A673 (cell line): ENCODE measurements at regions of chr17 and their contacts with region 1.

Region 1: GRCh38 chr17:38536661-38537060 is 69.1 kb downstream of the SRCIN1 start:
- DNase-seq: no peak
- H3K4me3 ChIP-seq: no peak overlapping the region
- H3K27ac ChIP-seq: no peak overlapping the region
- H3K4me1 ChIP-seq: no peaks in the 10 kb centered on the region
- H3K27me3 ChIP-seq: no peaks in the 10 kb centered on the region
- CTCF ChIP-seq: no peak

Region 2: GRCh38 chr17:38498186-38498752 is 38.4 kb before region 1 on chr17:
- CTCF ChIA-PET with region 1: no interaction called
- POLR2A ChIA-PET with region 1: no interaction called
- intact Hi-C with region 1: loop called (anchors 2 kb)
- DNase-seq: no peak
- H3K4me3 ChIP-seq: no peak overlapping the region
- H3K27ac ChIP-seq: no peak overlapping the region
- H3K4me1 ChIP-seq: no peaks in the 10 kb centered on the region
- H3K27me3 ChIP-seq: no peaks in the 10 kb centered on the region
- CTCF ChIP-seq: no peak

Region 3: DNA sequence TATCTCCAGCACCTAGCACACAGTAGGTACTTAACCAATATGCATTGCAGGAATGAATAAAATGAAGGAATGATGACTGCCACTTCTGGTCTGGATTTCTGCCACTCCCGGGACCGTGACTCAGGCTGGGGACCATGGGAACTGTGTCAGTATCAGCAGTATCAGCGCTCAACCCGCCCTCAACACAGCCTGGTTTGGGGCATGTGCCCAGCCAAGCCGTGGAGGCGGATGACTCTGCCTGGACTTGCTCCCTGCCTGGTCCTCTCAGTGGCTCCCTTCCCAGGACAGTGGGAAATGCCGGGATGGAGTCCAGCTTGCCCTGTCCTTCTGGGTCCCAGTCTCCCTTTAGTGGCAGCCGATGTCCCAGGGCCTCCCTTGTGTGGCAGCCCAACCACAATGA is 14.0 kb after region 1 on chr17:
- CTCF ChIA-PET with region 1: no interaction called
- POLR2A ChIA-PET with region 1: no interaction called
- intact Hi-C with region 1: no loop called
- DNase-seq: no peak
- H3K4me3 ChIP-seq: no peak overlapping the region
- H3K27ac ChIP-seq: no peak overlapping the region
- H3K4me1 ChIP-seq: no peaks in the 10 kb centered on the region
- H3K27me3 ChIP-seq: no peaks in the 10 kb centered on the region
- CTCF ChIP-seq: no peak

Region 4: DNA sequence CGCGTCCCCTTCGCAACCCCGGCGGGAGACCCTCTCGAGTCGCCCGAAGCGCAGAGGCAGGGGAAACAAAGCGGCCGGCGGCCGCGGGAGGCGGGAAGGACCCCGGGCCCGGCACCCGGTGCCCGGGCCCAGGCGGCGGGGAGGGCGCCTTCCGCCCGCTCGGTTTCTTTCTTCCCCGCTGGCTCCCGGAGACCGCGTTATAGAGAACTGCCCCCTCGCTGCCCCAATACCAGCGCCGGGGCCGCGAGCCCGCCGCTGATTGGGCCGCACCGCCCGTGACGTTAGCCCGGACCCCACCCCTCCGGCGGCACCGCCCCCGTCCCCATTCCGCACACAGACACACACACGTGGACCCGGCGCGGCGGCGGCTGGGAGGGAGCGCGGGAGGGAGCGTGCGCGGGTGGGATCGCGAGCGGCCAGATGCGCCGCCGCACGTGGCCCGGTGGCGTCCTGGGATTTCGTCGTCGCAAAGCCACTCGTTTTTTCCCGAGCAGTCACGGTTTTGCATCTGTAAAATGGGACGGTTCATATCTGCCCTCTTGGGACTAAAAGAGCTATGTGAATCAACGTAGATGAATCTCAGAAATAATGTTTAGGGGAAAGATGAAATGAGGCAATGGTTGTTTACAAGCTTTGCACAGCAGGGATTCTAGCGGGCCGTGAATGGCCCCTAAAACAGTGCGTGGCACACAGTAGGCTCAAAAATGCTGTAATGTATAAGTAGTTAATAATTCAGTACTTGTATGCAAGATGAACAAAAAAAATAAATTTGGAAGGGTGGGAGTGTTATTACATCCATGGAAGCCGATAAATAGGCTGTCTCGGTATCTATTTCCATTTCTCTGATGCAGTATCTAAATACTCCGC is 138.3 kb after region 1 on chr17 and contains the start of gene EPOP:
- CTCF ChIA-PET with region 1: no interaction called
- POLR2A ChIA-PET with region 1: no interaction called
- intact Hi-C with region 1: no loop called
- DNase-seq: peak; percentile 81
- H3K4me3 ChIP-seq: peak within 1 kb of the TSS; percentile 58
- H3K27ac ChIP-seq: peak within 1 kb of the TSS; percentile 75
- H3K4me1 ChIP-seq: no peaks in the 10 kb centered on the region
- H3K27me3 ChIP-seq: peaks cover 5% of the 10 kb centered on the region
- CTCF ChIP-seq: no peak
- total RNA-seq, gene EPOP: 4.0 and 5.9 TPM in 2 replicates

Region 5: DNA sequence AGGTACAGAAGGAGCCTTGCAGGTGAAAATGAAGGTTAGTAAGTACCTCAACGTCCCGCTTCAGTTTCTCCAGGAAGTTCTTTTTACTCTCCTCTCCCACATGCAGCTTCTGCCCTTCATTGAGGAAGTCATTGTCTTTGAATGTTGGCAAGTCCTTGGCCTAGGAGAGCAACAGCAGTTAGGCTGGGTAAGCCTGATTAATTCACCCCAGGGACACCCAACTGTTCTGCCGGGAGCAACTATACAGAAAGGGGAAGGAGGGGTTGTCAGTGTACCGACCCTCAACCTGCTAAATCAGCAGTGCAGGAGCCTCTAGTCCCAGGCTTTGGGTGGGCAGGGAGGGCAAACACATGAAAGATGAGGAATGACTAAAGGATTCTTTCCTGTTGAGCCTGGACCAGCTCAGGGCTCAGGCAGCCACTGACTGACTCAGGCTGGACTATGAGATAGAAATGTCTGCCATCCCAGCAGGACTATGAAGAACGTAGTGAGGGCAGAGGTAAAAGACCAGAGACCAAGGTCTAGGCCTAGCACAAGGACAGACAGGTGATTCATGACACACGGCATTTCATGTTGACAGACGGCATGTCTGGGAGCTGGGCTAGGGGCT is 241.1 kb after region 1 on chr17:
- CTCF ChIA-PET with region 1: no interaction called
- POLR2A ChIA-PET with region 1: no interaction called
- intact Hi-C with region 1: no loop called
- DNase-seq: no peak
- H3K4me3 ChIP-seq: no peak overlapping the region
- H3K27ac ChIP-seq: no peak overlapping the region
- H3K4me1 ChIP-seq: no peaks in the 10 kb centered on the region
- H3K27me3 ChIP-seq: no peaks in the 10 kb centered on the region
- CTCF ChIP-seq: no peak

Region 6: GRCh38 chr17:39132192-39132610 is 595.5 kb after region 1 on chr17:
- CTCF ChIA-PET with region 1: no interaction called
- POLR2A ChIA-PET with region 1: no interaction called
- intact Hi-C with region 1: no loop called
- DNase-seq: no peak
- H3K4me3 ChIP-seq: no peak overlapping the region
- H3K27ac ChIP-seq: no peak overlapping the region
- H3K4me1 ChIP-seq: no peaks in the 10 kb centered on the region
- H3K27me3 ChIP-seq: no peaks in the 10 kb centered on the region
- CTCF ChIP-seq: no peak